GM13977 (cell line): ENCODE measurements at regions of chr2 and their contacts with region 1.

Region 1: DNA sequence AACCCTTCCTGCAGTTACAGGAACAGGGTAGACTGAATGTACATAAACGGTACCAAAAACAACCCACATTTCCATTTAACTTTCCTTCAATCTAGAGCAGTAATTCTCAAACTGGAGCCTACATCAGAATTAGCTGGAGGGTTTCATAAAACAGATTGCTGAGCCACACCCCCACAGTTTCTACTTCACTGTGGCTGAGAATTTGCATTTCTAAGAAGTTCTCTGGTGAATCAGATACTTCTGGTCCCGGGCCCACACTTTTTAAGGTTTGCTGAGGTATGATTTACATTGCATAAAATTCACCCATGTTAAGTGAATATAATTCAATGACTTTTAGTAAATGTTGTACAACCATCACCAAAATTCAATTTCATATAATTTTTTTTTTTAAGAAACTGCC is 113.7 kb downstream of the SRBD1 start:
- DNase-seq: peak; percentile 28
- CTCF ChIP-seq: no peak

Region 2: DNA sequence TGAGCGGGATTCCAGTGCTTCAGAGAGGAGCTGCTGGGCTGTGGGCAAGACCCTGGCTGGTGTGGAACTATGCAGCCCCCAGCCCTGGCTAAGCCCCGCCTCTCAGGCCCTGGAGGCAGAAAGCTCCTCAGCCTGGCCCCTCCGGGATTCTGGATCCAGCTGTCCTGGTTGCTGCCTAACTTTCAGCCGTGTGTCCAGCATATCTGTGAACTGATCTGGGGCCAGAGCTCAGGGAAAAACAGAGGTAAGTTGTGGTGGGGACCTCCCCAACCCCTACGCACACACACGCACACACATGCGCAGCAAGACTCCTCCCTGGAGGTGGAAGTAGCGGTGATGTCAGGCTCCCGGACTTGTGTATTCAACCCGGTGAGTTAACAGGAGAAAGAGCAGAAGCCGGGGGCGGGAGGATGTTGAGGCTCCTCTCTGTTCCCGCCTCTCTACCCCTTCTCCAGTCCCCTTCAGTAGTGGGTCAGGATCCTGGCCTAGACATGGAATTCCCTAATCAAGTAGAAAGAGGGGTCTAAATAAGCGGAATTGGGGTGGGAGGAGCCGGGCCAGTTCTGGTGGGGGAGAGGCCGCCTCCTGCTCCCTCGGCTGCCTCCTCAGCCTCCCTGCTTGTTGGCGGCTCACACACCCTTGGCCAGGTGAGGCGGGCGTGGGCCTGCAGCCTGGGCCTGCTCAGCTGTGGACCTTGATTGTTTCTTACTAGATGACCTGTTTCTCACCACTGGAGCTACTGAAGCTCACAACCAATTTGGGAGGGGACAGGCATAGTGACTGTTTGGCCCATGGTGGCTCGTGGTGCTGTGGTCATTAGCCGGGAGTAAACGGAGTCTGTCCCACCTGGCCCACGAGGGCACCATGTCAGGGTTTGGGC is 521.5 kb before region 1 on chr2:
- in situ Hi-C with region 1: loop called (anchors 5 kb)
- DNase-seq: no peak
- CTCF ChIP-seq: no peak

Region 3: GRCh38 chr2:45224321-45224992 is 272.9 kb before region 1 on chr2:
- in situ Hi-C with region 1: no loop called
- DNase-seq: no peak
- CTCF ChIP-seq: no peak

Region 4: GRCh38 chr2:45611020-45611737 is 113.8 kb after region 1 on chr2 and contains the start of gene SRBD1:
- in situ Hi-C with region 1: no loop called
- DNase-seq: peak; percentile 82
- CTCF ChIP-seq: no peak

Region 5: GRCh38 chr2:46114996-46115395 is 617.6 kb after region 1 on chr2:
- in situ Hi-C with region 1: no loop called
- DNase-seq: no peak
- CTCF ChIP-seq: no peak